ENCODE measurements at regions of chr1 and their contacts with region 1.

Region 1: GRCh38 chr1:16155532-16156410 is at the start of gene EPHA2:
- H3K4me3 ChIP-seq: peak within 1 kb of the TSS; percentile 68
- H3K27ac ChIP-seq: peak within 1 kb of the TSS; percentile 63; the same call in 1 of the 2 replicates
- H3K4me1 ChIP-seq: peaks cover 4% of the 10 kb centered on the region; the same call in 1 of the 2 replicates
- CTCF ChIP-seq: peak; percentile 34; the same call in 1 of the 2 replicates

Region 2: GRCh38 chr1:16167331-16168143 is 11.8 kb after region 1 on chr1:
- CTCF ChIA-PET with region 1: interaction called, 5 read pairs
- POLR2A ChIA-PET with region 1: interaction called, 27 read pairs
- H3K4me3 ChIP-seq: peak overlapping the region; percentile 30
- H3K27ac ChIP-seq: no peak overlapping the region
- H3K4me1 ChIP-seq: peaks cover 5% of the 10 kb centered on the region
- CTCF ChIP-seq: no peak

Region 3: GRCh38 chr1:16175610-16176553 is 20.1 kb after region 1 on chr1:
- CTCF ChIA-PET with region 1: interaction called, 5 read pairs
- POLR2A ChIA-PET with region 1: interaction called, 10 read pairs
- H3K4me3 ChIP-seq: no peak overlapping the region
- H3K27ac ChIP-seq: peak overlapping the region; percentile 85
- H3K4me1 ChIP-seq: peaks cover 10% of the 10 kb centered on the region
- CTCF ChIP-seq: no peak

Region 4: DNA sequence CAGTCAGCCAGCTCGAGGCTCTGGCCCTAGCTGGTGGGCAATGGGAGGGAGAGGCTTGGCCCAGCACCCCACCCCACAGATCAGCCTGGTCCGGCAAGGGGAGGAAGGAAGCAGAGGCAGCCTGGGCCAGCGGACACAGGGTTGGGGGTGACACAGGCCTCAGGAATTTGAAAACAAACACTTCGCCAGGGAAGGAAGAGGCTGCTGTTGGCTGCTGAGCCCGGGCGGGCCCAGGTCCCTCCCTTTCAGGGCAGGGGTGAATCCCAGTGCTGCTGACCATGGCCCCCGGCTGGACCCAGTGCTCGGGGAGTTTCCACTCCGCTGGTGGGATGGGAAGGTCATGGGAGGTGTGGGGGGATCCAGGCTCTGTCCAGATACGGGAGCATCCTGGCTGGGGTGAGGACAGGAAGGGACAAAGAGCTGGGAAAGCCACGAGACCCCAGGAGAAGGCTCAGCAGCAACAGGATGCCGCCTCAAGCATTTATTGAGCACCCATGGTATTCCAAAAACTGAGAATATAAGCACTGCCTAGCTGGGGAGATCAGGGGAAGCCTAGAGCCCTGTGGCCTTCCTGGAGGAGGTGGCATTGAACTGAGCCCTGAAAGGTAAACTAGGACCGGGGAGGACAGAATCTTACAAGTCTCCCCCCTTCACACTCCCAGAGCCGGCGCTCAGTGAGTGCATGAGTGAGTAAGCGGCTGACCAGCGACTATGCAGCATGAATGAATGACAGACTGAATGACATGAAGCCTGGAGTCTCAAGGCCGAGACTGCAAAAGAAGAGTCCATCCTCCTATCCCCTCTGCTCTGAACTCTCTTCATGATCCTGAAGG is 26.3 kb after region 1 on chr1:
- CTCF ChIA-PET with region 1: interaction called, 6 read pairs
- POLR2A ChIA-PET with region 1: interaction called, 10 read pairs
- H3K4me3 ChIP-seq: no peak overlapping the region
- H3K27ac ChIP-seq: no peak overlapping the region
- H3K4me1 ChIP-seq: no peaks in the 10 kb centered on the region
- CTCF ChIP-seq: no peak

Measured in HEK293 (cell line).